Mammary epithelial cell (primary cell): ENCODE measurements at regions of chr12 and their contacts with region 1.

Region 1: DNA sequence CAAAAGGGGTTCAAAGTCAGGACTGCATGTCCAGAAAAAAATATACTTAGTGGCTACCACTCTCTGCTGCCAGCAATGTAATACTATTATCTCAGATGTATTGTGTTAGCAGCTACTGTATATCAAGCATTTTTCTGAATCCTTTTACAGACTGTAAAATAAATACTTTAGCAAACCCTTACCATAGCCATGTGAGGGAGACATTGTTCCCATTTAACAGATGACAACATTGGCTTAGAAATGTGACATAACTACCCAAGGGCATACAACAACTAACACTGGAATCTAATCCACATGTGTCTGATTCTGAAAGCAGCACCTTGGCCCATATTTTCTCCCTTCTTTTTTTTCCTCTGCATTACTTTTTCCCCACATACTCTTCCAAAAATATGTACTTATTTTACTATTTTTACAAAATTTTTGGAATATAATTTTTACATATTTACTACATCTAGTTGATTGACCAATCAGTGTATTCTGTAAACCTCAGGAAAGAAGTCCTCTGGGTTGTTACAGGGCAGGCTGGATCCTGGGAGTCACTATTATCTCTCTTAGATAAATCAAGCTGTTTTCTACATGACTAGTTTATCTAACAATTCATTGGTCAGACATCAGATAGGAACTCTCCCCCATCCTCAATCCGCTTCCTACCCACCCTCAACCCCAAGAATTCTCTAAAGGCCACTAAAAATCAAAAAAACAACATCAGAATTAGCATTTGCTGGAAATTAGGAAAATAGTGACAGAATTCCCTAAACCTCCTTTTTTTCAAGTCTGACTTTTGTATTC is 154.1 kb downstream of the BTG1 start:
- DNase-seq: peak; percentile 14
- H3K4me3 ChIP-seq: no peak overlapping the region
- H3K27ac ChIP-seq: no peak overlapping the region
- H3K4me1 ChIP-seq: peaks cover 4% of the 10 kb centered on the region
- H3K27me3 ChIP-seq: no peaks in the 10 kb centered on the region
- CTCF ChIP-seq: no peak

Region 2: GRCh38 chr12:91811481-91812287 is 179.9 kb before region 1 on chr12:
- CTCF ChIA-PET with region 1: no interaction called
- dilution Hi-C with region 1: no loop called
- in situ Hi-C with region 1: no loop called
- intact Hi-C with region 1: loop called (anchors 10 kb)
- DNase-seq: peak; percentile 39
- H3K4me3 ChIP-seq: no peak overlapping the region
- H3K27ac ChIP-seq: no peak overlapping the region
- H3K4me1 ChIP-seq: peaks cover 6% of the 10 kb centered on the region
- H3K27me3 ChIP-seq: no peaks in the 10 kb centered on the region
- CTCF ChIP-seq: peak; percentile 75 to 79